CD4-positive, alpha-beta T cell (primary cell): ENCODE measurements at regions of chr19 and their contacts with region 1.

Region 1: DNA sequence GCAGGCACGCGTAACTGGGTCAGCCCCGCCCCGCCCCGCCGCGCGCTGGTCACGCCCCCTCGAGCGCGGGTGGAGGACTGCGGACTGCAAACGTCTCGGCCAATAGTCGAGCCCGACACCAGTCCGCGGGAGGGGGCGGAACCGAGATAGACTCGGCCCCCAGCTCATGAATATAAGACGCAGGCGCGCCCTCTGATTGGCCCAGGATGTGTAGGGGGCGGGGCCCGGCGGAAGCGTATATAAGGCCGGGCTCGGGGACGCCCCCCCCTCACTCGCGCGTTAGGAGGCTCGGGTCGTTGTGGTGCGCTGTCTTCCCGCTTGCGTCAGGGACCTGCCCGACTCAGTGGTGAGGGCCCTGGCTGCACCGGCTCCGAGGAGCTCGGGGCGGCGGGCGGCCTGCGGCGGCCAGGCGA is at the start of gene CIRBP:
- DNase-seq: peak; percentile 98 to 100 (median 99)
- ATAC-seq: peak; percentile 81
- H3K4me3 ChIP-seq: peak within 1 kb of the TSS; percentile 99
- H3K4me3 Mint-ChIP-seq: peak within 1 kb of the TSS; percentile 94
- H3K27ac ChIP-seq: peak within 1 kb of the TSS; percentile 78 to 84
- H3K27ac Mint-ChIP-seq: peak within 1 kb of the TSS; percentile 88
- H3K4me1 ChIP-seq: peaks cover 86% of the 10 kb centered on the region
- H3K4me1 Mint-ChIP-seq: peaks cover 68% of the 10 kb centered on the region
- H3K27me3 ChIP-seq: no peaks in the 10 kb centered on the region
- H3K27me3 Mint-ChIP-seq: no peaks in the 10 kb centered on the region
- CTCF ChIP-seq: no peak
- total RNA-seq, gene CIRBP: 614 to 628 TPM

Region 2: GRCh38 chr19:892243-893050 is 376.6 kb before region 1 on chr19:
- CTCF ChIA-PET with region 1: no interaction called
- POLR2A ChIA-PET with region 1: interaction called, 13 read pairs
- intact Hi-C with region 1: no loop called
- DNase-seq: peak in 2 of 14 experiments; percentile 33 to 52
- ATAC-seq: peak; percentile 44
- H3K4me3 ChIP-seq: peak overlapping the region; percentile 69
- H3K4me3 Mint-ChIP-seq: peak overlapping the region; percentile 93
- H3K27ac ChIP-seq: peak overlapping the region; percentile 58 to 92
- H3K27ac Mint-ChIP-seq: peak overlapping the region; percentile 98
- H3K4me1 ChIP-seq: peaks cover 25% of the 10 kb centered on the region
- H3K4me1 Mint-ChIP-seq: peaks cover 25% of the 10 kb centered on the region
- H3K27me3 ChIP-seq: no peaks in the 10 kb centered on the region
- H3K27me3 Mint-ChIP-seq: peaks cover 3% of the 10 kb centered on the region
- CTCF ChIP-seq: no peak

Region 3: DNA sequence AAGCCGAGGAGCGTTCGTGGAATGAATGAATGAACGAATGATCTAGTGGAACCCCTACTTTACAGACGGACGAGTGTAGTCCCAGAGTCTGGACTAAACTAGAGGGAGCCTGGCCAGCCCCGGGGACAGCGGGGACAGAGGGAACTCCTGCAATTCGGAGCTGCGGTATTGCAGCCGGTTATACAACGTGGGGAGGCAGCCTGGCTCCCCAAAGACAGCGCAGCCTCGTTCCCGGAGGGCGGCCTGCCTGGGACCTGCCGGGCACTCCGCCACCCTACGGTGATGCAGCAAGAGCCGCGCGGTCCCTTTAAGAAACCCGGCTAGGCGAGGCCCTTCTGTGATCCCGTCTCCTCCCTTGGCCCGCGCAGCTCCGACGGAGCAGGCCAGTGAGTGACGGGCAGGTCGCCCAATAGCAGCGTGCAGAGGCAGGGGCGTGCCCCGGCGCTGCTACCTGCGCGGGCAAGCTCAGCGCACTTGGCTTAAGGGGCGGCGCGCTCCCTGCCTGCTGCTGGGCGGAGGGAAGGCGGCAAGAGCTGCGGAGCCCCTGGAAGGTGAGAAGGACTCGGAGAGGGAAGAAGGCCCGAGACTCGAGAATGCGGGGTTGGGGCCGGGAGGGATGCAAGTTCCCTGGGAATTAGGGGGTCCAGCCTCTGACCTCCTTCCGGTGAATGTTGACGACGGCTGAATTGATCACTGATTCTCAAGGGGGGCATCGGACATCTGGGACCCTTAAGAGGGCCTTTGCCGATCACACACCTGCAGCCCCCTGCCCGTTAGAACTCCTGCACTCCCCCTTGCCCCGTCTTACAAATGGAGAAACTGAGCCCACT is 229.2 kb before region 1 on chr19 and contains the start of gene ABCA7:
- CTCF ChIA-PET with region 1: interaction called, 3 read pairs
- POLR2A ChIA-PET with region 1: interaction called, 26 read pairs
- intact Hi-C with region 1: no loop called
- DNase-seq: peak; percentile 99 to 100 (median 99)
- ATAC-seq: peak; percentile 90
- H3K4me3 ChIP-seq: peak within 1 kb of the TSS; percentile 91
- H3K4me3 Mint-ChIP-seq: peak within 1 kb of the TSS; percentile 100
- H3K27ac ChIP-seq: peak within 1 kb of the TSS; percentile 43 to 51
- H3K27ac Mint-ChIP-seq: peak within 1 kb of the TSS; percentile 92
- H3K4me1 ChIP-seq: peaks cover 81% of the 10 kb centered on the region
- H3K4me1 Mint-ChIP-seq: peaks cover 51% of the 10 kb centered on the region
- H3K27me3 ChIP-seq: no peaks in the 10 kb centered on the region
- H3K27me3 Mint-ChIP-seq: no peaks in the 10 kb centered on the region
- CTCF ChIP-seq: no peak
- total RNA-seq, gene ABCA7: 114 to 118 TPM

Region 4: GRCh38 chr19:1082172-1082927 is 186.7 kb before region 1 on chr19:
- CTCF ChIA-PET with region 1: no interaction called
- POLR2A ChIA-PET with region 1: interaction called, 35 read pairs
- intact Hi-C with region 1: no loop called
- DNase-seq: peak; percentile 76 to 95 (median 86)
- ATAC-seq: peak; percentile 76
- H3K4me3 ChIP-seq: no peak overlapping the region
- H3K4me3 Mint-ChIP-seq: peak overlapping the region; percentile 87
- H3K27ac ChIP-seq: peak overlapping the region; percentile 34 to 64
- H3K27ac Mint-ChIP-seq: peak overlapping the region; percentile 98
- H3K4me1 ChIP-seq: peaks cover 92% of the 10 kb centered on the region
- H3K4me1 Mint-ChIP-seq: peaks cover 39% of the 10 kb centered on the region
- H3K27me3 ChIP-seq: no peaks in the 10 kb centered on the region
- H3K27me3 Mint-ChIP-seq: no peaks in the 10 kb centered on the region
- CTCF ChIP-seq: no peak

Region 5: GRCh38 chr19:1241417-1242095 is 27.5 kb before region 1 on chr19 and contains the start of gene ATP5F1D:
- CTCF ChIA-PET with region 1: interaction called, 255 read pairs
- POLR2A ChIA-PET with region 1: interaction called, 476 read pairs
- intact Hi-C with region 1: loop called (anchors 1 kb)
- DNase-seq: peak; percentile 82 to 96 (median 92)
- ATAC-seq: peak; percentile 63
- H3K4me3 ChIP-seq: peak within 1 kb of the TSS; percentile 53
- H3K4me3 Mint-ChIP-seq: peak within 1 kb of the TSS; percentile 91
- H3K27ac ChIP-seq: peak within 1 kb of the TSS in 1 of 2 donors; percentile 25
- H3K27ac Mint-ChIP-seq: peak within 1 kb of the TSS; percentile 89
- H3K4me1 ChIP-seq: peaks cover 78% of the 10 kb centered on the region
- H3K4me1 Mint-ChIP-seq: peaks cover 31% of the 10 kb centered on the region
- H3K27me3 ChIP-seq: peaks cover 6% of the 10 kb centered on the region in 2 experiments
- H3K27me3 Mint-ChIP-seq: peaks cover 13% of the 10 kb centered on the region
- CTCF ChIP-seq: no peak
- total RNA-seq, gene ATP5F1D: 77.6 to 92.6 TPM

Region 6: GRCh38 chr19:1383311-1384084 is 114.4 kb after region 1 on chr19 and contains the start of gene NDUFS7:
- CTCF ChIA-PET with region 1: no interaction called
- POLR2A ChIA-PET with region 1: interaction called, 17 read pairs
- intact Hi-C with region 1: no loop called
- DNase-seq: peak; percentile 85 to 100 (median 94)
- ATAC-seq: peak; percentile 90
- H3K4me3 ChIP-seq: peak within 1 kb of the TSS; percentile 92
- H3K4me3 Mint-ChIP-seq: peak within 1 kb of the TSS; percentile 97
- H3K27ac ChIP-seq: peak within 1 kb of the TSS; percentile 70 to 87
- H3K27ac Mint-ChIP-seq: peak within 1 kb of the TSS; percentile 98
- H3K4me1 ChIP-seq: peaks cover 34% of the 10 kb centered on the region
- H3K4me1 Mint-ChIP-seq: peaks cover 19% of the 10 kb centered on the region
- H3K27me3 ChIP-seq: no peaks in the 10 kb centered on the region
- H3K27me3 Mint-ChIP-seq: peaks cover 11% of the 10 kb centered on the region
- CTCF ChIP-seq: no peak
- total RNA-seq, gene NDUFS7: 40.0 to 42.6 TPM